BJ (cell line): ENCODE measurements at regions of chr9 and their contacts with region 1.

Region 1: GRCh38 chr9:128927731-128928411 is 7.1 kb downstream of the PHYHD1 start:
- DNase-seq: no peak
- H3K4me3 ChIP-seq: no peak overlapping the region
- H3K27me3 ChIP-seq: no peaks in the 10 kb centered on the region
- CTCF ChIP-seq: peak; percentile 87

Region 2: DNA sequence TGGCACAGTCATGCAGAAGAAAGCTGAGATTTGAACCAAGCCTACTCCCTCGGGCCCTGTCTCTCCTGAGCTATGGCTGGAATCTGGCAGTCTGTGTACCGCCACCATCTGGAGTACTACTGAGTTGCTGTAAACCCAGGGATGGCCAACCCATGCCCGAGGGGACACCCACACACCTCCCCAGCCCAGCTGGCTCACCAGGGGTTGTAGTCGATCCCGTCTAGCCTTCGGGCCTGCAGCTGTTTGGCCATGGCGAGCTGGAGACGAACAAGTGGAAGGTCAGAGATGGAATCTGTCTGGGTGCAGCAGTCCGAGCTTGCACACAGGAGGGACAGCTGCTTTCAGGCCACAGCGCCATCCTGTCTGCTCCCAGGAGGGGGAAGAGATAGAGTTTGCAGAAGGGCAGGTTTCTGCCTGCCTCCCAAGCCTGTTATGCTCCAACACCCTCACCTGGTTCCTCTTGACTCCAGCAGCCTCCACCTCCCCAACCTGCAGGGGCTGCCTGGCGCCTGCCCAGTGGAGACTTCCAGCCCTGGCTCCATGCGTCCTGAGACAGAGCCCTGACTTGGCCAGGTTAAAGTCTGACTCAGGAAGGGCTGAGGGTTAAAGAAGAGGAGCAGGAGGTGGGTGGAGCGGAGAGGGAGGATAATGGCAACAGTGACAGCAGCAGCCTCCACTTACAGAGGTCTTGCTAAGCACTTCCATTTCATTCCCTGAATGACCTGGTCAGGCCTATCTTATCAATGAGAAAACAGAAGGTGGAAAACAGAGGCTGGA is 82.5 kb before region 1 on chr9:
- CTCF ChIA-PET with region 1: interaction called, 11 read pairs
- POLR2A ChIA-PET with region 1: no interaction called
- DNase-seq: no peak
- H3K4me3 ChIP-seq: no peak overlapping the region
- H3K27me3 ChIP-seq: no peaks in the 10 kb centered on the region
- CTCF ChIP-seq: peak; percentile 39

Region 3: GRCh38 chr9:128870128-128870952 is 57.5 kb before region 1 on chr9:
- CTCF ChIA-PET with region 1: interaction called, 228 read pairs
- POLR2A ChIA-PET with region 1: no interaction called
- DNase-seq: no peak
- H3K4me3 ChIP-seq: no peak overlapping the region
- H3K27me3 ChIP-seq: no peaks in the 10 kb centered on the region
- CTCF ChIP-seq: no peak

Region 4: DNA sequence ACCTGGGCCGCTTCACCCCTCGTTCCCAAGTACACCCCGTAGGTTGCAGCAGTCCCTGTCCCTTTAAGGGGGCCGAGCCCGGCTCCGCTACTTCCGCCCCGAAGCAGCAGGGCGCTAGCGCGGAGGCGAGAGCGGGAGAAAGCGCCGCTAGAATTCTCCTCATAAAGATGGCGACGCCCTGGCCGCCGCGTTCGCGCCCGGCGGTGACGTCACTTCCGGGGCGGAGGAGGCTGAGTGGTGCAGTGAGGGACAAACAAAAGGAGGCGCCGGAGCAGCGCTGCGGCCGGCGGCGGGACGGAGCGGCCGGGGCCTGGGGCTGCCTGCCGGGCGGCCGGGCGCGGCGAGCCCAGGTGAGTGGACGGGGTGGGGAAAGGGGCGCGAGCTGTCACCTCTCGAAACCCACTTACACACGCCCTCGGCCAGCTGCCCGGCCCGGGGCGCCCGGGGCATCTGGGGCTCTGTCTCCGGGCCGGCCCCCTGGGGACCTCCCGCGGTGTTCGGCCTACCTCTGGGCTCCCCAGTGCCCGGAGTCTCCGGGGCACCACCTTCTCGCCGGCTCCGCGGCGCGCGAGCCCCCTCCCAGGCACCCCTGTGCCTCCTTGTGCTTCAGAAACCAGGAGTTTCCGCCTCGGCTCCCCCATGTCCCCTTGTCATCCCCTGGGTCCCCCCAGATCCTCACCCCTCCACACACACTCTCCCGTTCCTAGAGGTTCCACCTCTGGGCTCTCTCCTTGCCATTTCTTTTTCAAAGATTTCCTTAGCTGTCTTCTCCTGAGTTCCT is 45.8 kb before region 1 on chr9 and contains the starts of genes KYAT1 and LRRC8A:
- CTCF ChIA-PET with region 1: interaction called, 27 read pairs
- POLR2A ChIA-PET with region 1: no interaction called
- DNase-seq: peak; percentile 70
- H3K4me3 ChIP-seq: peak within 1 kb of the TSS; percentile 85
- H3K27me3 ChIP-seq: no peaks in the 10 kb centered on the region
- CTCF ChIP-seq: no peak
- polyA plus RNA-seq, gene KYAT1: 4.9 and 5.6 TPM in 2 replicates
- polyA plus RNA-seq, gene LRRC8A: 29.6 and 56.2 TPM in 2 replicates

Region 5: DNA sequence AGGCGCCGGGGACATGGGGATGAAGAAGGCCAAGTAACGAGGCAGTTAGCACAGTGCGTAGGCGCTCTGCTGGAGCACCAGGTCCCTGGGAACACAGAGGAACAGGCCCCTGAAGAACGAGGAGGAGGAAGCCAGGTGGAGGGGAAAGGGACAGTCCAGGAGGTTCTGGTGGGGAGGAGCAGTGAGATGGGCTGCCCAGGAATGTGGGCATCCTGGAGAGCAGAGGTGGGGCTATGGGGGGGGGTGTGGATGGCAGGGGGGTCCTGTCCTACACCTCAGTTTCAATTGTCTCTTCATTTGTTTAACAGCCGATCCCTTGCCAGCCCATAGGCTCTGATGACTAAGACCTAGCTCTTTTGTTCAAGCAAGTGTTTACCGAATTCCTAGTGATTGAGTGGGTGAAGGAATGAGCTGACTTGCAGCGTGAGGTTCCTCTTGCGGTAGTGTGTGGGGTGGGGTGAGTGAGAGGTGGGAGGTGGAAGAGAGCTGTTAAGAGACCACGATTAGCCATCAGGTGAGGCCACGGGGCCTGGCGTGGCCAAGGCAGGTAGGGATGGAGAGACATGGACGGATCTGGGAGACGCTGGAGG is 15.5 kb before region 1 on chr9:
- CTCF ChIA-PET with region 1: interaction called, 24 read pairs
- POLR2A ChIA-PET with region 1: no interaction called
- DNase-seq: peak; percentile 54
- H3K4me3 ChIP-seq: no peak overlapping the region
- H3K27me3 ChIP-seq: no peaks in the 10 kb centered on the region
- CTCF ChIP-seq: no peak

Region 6: DNA sequence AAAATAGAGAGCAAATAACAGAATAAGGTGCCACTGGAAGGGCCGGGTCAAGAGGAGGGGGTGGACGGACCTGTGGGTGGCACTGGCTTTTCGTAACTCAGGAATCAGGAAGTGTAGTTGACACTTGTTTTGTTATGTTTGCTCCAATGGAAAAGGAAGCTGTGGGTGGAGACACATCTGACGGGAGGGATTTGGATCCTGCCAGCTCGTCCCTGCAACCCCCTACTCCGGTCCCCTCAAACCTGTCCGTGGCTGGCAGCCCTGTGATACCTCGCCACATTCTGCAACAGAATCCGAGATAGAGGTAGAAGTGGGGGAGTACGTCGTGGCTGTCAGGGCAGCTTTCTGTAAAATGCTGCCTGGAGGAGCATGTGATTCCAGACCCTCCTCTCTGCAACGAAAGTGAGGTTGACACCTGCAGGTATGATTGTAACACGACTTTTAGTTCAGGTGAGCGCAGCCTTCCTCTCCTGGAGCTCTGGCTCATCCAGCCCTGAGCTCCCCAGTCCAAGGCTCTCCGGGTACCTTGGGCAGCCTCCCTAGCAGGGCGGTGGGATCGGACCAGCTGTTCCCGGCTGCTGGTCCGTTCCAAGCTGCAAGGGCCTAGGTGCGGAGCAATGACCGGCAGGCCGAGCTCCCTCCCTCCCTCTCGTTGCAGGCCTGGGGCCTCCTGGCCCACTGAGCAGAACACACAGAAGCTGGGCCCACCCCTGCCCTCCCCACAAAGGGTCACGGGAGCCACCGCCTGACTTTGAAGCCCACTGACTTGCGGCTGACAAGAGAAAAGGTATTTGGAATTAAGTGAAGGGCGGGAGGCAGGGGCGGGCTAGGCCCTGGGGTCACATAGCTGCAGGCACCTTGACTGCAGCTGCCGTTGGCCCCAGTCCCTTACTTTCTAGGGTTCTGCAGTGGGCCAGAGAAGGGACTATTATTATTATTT is 354.7 kb after region 1 on chr9:
- CTCF ChIA-PET with region 1: no interaction called
- POLR2A ChIA-PET with region 1: no interaction called
- DNase-seq: no peak
- H3K4me3 ChIP-seq: no peak overlapping the region
- H3K27me3 ChIP-seq: no peaks in the 10 kb centered on the region
- CTCF ChIP-seq: no peak